Tibial artery (tissue), 4 donors: ENCODE measurements at regions of chr1 and their contacts with region 1.

Region 1: DNA sequence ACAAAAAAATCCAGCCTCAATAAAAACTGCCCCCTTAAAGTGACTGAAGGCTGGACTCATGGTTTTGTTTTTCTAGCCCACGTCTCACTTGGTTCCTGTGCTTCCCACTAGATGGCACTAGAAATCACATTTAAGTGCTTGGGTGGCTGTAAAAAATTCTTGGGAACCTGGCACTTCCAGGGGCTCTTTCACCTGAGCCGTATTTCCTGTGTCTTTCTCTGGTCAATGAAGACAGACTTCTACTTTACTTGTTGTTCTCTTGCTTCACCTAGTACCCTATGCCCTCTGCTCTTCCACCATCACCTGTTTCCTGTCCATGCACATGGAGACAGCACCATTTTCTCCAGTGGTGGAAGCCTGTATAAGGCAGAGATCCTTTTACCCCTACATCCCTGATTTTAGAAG is 20.0 kb downstream of the METTL13 start:
- DNase-seq: no peak
- H3K4me3 ChIP-seq: no peak overlapping the region
- H3K27ac ChIP-seq: no peak overlapping the region
- H3K4me1 ChIP-seq: peaks cover 0 to 6% (median 2%) of the 10 kb centered on the region in 4 donors
- H3K27me3 ChIP-seq: no peaks in the 10 kb centered on the region
- CTCF ChIP-seq: peak; percentile 68 to 70

Region 2: DNA sequence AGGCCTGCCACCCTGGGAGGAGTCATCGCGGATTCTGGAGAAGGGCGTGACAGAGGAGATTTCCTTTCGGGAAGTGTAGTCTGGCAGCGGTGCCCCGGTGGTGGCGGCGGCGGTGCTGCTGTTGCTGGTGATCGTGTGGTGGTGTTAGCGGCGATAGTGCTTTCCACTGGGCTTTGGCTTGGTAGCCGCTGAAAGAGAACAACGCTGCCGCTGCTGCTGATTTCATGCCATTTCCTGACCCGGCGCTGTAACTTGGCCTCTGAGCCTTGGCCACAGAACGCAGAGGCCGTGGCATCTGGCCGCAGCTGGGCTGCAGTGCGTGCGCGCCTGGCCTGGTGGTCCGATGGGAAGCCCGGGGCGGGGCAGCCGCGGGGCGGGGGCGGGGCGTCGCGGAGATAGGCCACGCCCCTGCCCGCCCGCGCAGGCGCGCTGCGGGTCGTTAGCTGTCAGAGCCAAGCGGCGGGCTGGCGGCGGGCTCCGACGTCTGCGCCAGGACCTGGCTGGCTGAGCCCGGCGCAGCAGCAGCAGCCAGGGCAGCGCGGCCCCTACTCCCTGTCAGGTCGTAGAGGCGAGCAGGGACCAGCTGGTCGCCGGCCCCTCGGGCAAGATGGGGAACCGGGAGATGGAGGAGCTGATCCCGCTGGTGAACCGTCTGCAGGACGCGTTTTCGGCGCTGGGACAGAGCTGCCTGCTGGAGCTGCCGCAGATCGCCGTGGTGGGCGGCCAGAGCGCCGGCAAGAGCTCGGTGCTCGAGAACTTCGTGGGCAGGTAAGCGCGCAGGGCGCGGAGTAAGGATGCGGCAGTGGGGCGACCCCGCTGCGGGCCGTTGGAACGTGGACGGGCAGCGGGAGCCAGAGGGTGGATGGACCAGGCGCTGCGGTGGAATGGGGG is 39.8 kb after region 1 on chr1 and contains the start of gene DNM3:
- intact Hi-C with region 1: no loop called
- DNase-seq: peak; percentile 68 to 90
- H3K4me3 ChIP-seq: peak within 1 kb of the TSS; percentile 64 to 92
- H3K27ac ChIP-seq: peak within 1 kb of the TSS; percentile 64 to 74
- H3K4me1 ChIP-seq: peaks cover 0 to 14% (median 8%) of the 10 kb centered on the region in 4 donors
- H3K27me3 ChIP-seq: no peaks in the 10 kb centered on the region
- CTCF ChIP-seq: no peak

Region 3: DNA sequence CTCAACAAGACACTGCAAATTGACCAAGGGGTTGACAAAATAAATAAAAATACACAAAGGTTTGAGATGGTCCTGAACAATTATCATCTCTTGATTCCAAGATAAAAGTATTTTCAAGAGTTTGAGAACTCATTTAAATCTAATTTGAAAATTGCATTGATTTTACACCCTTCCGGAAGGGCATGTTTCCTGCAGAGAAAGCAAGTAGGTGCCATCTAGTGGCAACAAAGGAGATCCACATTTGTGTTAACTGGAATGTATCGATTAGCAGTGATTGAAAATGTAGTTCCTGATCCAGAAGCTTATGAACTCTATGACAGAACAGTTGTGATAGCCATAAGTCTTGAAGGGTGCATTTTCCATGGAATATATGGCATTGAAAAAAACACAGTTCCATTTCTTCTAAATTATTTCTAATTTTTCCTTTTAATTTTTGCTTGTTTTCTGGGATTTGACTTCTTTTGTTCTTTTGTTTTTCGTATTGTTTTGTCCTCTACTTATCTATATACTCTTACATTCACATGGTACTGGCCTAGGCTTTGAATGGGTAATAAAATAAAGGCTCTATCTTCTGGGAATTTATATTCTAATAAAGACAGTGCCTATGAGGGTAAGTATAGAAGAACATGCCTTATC is 183.5 kb after region 1 on chr1:
- intact Hi-C with region 1: loop called (anchors 5 kb)
- DNase-seq: no peak
- H3K4me3 ChIP-seq: no peak overlapping the region
- H3K27ac ChIP-seq: no peak overlapping the region
- H3K4me1 ChIP-seq: no peaks in the 10 kb centered on the region
- H3K27me3 ChIP-seq: no peaks in the 10 kb centered on the region
- CTCF ChIP-seq: peak; percentile 68 to 72

Region 4: GRCh38 chr1:172024516-172024915 is 223.0 kb after region 1 on chr1:
- intact Hi-C with region 1: no loop called
- DNase-seq: no peak
- H3K4me3 ChIP-seq: no peak overlapping the region
- H3K27ac ChIP-seq: no peak overlapping the region
- H3K4me1 ChIP-seq: no peaks in the 10 kb centered on the region
- H3K27me3 ChIP-seq: no peaks in the 10 kb centered on the region
- CTCF ChIP-seq: no peak

Region 5: GRCh38 chr1:172443626-172444453 is 642.4 kb after region 1 on chr1 and contains the start of gene PIGC:
- intact Hi-C with region 1: loop called (anchors 10 kb)
- DNase-seq: peak; percentile 87 to 93
- H3K4me3 ChIP-seq: peak within 1 kb of the TSS; percentile 89 to 99
- H3K27ac ChIP-seq: peak within 1 kb of the TSS; percentile 84 to 91
- H3K4me1 ChIP-seq: peaks cover 0 to 23% (median 9%) of the 10 kb centered on the region in 4 donors
- H3K27me3 ChIP-seq: no peaks in the 10 kb centered on the region
- CTCF ChIP-seq: peak; percentile 81 to 87